ENCODE measurements at regions of chr22 and their contacts with region 1.

Region 1: DNA sequence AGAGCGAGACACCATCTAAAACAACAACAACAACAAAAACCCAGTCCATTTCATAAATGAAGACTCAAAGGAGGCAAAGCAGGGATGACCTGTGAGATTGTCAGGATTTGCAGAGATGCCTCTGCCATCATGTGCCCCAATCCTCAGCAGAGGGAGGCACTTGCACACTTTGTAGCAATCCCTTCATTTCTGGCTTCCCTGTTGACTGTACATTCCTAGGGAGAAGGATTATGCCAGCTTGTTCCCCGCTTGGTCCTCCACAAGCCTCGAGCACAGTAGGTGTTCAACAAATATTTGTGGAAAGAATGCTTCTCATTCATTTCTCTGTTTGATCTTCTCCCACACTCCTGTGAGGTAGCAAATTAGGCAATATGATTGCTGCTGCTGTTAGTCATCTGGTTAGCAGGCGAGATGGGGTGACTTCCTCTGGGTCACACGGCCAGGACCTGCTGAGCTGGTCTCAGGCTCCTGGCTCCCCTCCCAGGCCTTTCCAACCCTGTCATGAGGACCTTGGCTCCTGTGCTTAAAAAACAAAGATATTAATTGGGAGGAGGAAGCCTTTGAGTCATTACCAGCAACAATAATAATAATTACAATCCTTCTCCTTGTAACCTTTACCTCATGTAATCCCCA is 34.1 kb downstream of the LIF start:
- DNase-seq: peak; percentile 89 to 100
- H3K4me3 ChIP-seq: no peak overlapping the region
- H3K27ac ChIP-seq: peak overlapping the region; percentile 98
- H3K4me1 ChIP-seq: peaks cover 86% of the 10 kb centered on the region
- H3K27me3 ChIP-seq: no peaks in the 10 kb centered on the region
- CTCF ChIP-seq: no peak; the same call in 1 of the 2 replicates

Region 2: DNA sequence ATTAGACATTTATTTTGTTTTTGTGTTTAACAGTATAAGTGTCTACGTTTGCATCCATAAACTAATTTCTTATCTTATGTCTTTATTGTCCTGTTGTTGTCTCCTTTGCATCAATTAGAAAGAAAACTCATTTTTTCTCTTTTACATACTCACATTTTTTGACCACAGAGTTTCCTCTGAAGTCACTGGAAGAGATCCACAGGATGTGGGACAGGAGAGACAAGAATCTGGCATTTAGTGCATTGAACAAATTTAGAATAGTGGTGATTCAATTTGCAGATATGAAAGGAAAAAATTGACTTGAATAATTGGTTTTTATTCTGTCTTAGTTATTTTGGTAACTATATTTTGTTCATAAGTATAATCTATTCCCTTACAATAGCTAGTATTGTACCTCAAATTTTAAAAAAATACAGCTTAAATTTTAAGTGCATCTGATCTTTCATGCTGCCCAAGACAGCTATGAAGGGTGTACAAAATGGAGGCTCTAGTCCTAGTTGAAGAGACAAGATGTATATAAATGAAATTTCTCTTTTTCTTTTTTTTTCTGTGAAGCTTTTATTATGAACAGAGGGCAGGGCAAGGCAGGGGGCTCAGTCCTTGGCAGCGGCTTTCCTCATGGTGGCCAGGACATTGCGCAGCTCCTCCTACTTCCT is 107.8 kb before region 1 on chr22:
- CTCF ChIA-PET with region 1: no interaction called
- POLR2A ChIA-PET with region 1: no interaction called
- intact Hi-C with region 1: loop called (anchors 2 kb)
- DNase-seq: no peak
- H3K4me3 ChIP-seq: no peak overlapping the region
- H3K27ac ChIP-seq: no peak overlapping the region
- H3K4me1 ChIP-seq: no peaks in the 10 kb centered on the region; the same call in none of the 2 replicates
- H3K27me3 ChIP-seq: no peaks in the 10 kb centered on the region
- CTCF ChIP-seq: no peak

Region 3: GRCh38 chr22:31439808-31440207 is 1227.3 kb after region 1 on chr22:
- CTCF ChIA-PET with region 1: no interaction called
- POLR2A ChIA-PET with region 1: no interaction called
- intact Hi-C with region 1: no loop called
- DNase-seq: no peak
- H3K4me3 ChIP-seq: no peak overlapping the region
- H3K27ac ChIP-seq: no peak overlapping the region
- H3K4me1 ChIP-seq: no peaks in the 10 kb centered on the region
- H3K27me3 ChIP-seq: no peaks in the 10 kb centered on the region
- CTCF ChIP-seq: no peak